ENCODE measurements at regions of chr6 and their contacts with region 1.

Region 1: DNA sequence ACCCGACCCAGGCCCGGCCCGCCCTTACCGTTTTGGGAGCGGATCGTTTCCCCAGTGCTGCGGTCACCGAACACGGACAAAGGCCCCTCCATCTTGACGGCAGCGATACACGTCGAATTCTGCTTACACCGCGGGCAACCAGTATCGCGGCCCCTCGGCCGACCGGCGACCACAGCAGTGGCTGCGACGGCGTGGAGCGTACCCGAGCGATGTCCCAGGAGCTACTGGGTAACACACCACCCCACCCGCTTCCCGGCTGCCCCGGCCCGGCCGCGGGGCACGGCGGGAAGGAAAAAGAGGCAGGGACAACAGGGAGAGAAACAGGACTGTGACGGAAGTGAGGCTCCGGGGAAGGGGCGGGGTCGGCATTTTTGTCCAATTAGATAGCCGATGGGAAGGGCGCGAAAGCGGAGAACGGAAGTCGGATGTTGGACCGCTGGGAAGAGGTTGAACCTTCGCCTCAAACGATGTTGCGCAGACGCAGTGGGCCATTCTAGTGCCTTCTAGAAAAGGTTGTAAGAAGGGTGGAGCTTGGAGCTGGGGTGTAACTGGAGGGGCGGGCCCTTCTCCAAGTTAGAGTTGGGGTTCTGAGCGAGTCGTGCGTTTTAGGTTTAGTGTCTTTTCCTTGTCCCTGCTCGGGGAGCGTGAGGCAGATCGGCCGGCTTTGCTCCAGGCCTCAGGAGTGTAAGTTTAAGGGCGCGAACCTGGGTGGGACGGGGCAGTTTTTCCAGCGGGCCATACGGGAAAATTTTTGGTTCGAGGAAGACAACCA is at the start of gene TCP1:
- DNase-seq: peak; percentile 99
- H3K4me3 ChIP-seq: peak within 1 kb of the TSS; percentile 94 to 98 (median 97)
- H3K27ac ChIP-seq: peak within 1 kb of the TSS; percentile 87
- H3K4me1 ChIP-seq: peaks cover 13% of the 10 kb centered on the region
- H3K27me3 ChIP-seq: no peaks in the 10 kb centered on the region
- CTCF ChIP-seq: no peak
- total RNA-seq, gene TCP1: 186 to 243 TPM

Region 2: GRCh38 chr6:159357211-159357915 is 432.2 kb before region 1 on chr6:
- CTCF ChIA-PET with region 1: no interaction called
- dilution Hi-C with region 1: no loop called
- in situ Hi-C with region 1: no loop called
- intact Hi-C with region 1: no loop called
- DNase-seq: no peak
- H3K4me3 ChIP-seq: no peak overlapping the region
- H3K27ac ChIP-seq: no peak overlapping the region
- H3K4me1 ChIP-seq: no peaks in the 10 kb centered on the region
- H3K27me3 ChIP-seq: peaks cover 2% of the 10 kb centered on the region
- CTCF ChIP-seq: no peak

Region 3: GRCh38 chr6:159726918-159727716 is 62.4 kb before region 1 on chr6 and contains the start of gene WTAP:
- CTCF ChIA-PET with region 1: interaction called, 3 read pairs
- dilution Hi-C with region 1: no loop called
- in situ Hi-C with region 1: no loop called
- intact Hi-C with region 1: loop called (anchors 2 kb)
- DNase-seq: peak; percentile 97
- H3K4me3 ChIP-seq: peak within 1 kb of the TSS; percentile 84 to 92 (median 91)
- H3K27ac ChIP-seq: peak within 1 kb of the TSS; percentile 89
- H3K4me1 ChIP-seq: peaks cover 16% of the 10 kb centered on the region
- H3K27me3 ChIP-seq: no peaks in the 10 kb centered on the region
- CTCF ChIP-seq: no peak
- total RNA-seq, gene WTAP: 64.5 to 92.0 TPM

Region 4: DNA sequence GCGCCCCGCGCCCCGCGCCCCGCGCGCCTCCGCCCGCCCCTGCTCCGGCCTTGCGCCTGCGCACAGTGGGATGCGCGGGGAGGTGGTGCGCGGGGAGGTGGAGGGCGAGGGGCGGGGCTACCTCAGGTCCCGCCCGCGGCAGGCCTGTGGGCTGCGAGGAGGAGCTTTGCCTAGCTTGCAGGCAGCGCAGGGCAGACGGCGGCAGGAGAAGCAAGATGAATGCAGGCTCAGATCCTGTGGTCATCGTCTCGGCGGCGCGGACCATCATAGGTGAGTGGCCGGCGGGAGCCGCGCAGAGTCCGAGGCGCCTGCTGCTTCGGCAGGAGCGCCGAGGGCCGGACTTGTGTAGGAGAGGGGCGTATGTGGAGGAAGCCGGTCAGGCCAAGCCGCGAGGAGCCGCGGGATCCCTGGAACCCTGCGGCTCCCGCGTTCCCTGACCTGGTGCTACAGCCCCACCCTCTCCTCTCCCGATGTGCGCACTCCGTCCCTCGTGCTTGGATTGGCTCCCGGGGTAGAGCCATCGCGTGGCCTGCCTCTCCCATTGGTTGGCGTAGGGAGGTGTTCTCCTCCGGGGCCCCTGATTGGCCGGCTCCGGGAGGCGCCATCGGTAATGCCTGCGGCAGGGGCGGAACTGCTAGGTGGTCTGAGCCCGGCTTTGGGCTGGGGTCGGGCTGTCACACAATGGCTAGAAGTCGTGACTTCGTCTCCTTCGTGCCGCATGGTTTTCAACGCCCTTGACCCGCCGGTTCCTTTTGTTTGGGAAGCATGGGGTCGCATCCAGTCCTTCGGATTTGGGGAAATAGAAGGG is 27.5 kb before region 1 on chr6 and contains the start of gene ACAT2:
- CTCF ChIA-PET with region 1: no interaction called
- dilution Hi-C with region 1: no loop called
- in situ Hi-C with region 1: no loop called
- intact Hi-C with region 1: loop called (anchors 2 kb)
- DNase-seq: peak; percentile 95
- H3K4me3 ChIP-seq: peak within 1 kb of the TSS; percentile 49 to 72 (median 65)
- H3K27ac ChIP-seq: peak within 1 kb of the TSS; percentile 68
- H3K4me1 ChIP-seq: peaks cover 26% of the 10 kb centered on the region
- H3K27me3 ChIP-seq: no peaks in the 10 kb centered on the region
- CTCF ChIP-seq: no peak
- total RNA-seq, gene ACAT2: 39.3 to 235 TPM

Region 5: GRCh38 chr6:159852877-159853276 is 63.3 kb after region 1 on chr6:
- CTCF ChIA-PET with region 1: no interaction called
- dilution Hi-C with region 1: no loop called
- in situ Hi-C with region 1: no loop called
- intact Hi-C with region 1: loop called (anchors 1 kb)
- DNase-seq: no peak
- H3K4me3 ChIP-seq: no peak overlapping the region
- H3K27ac ChIP-seq: no peak overlapping the region
- H3K4me1 ChIP-seq: no peaks in the 10 kb centered on the region
- H3K27me3 ChIP-seq: no peaks in the 10 kb centered on the region
- CTCF ChIP-seq: peak; percentile 23 to 51

Region 6: GRCh38 chr6:159941286-159942113 is 151.9 kb after region 1 on chr6:
- CTCF ChIA-PET with region 1: no interaction called
- dilution Hi-C with region 1: no loop called
- in situ Hi-C with region 1: no loop called
- intact Hi-C with region 1: loop called (anchors 2 kb)
- DNase-seq: peak; percentile 51
- H3K4me3 ChIP-seq: no peak overlapping the region
- H3K27ac ChIP-seq: no peak overlapping the region
- H3K4me1 ChIP-seq: no peaks in the 10 kb centered on the region
- H3K27me3 ChIP-seq: no peaks in the 10 kb centered on the region
- CTCF ChIP-seq: peak; percentile 35 to 66

Region 7: GRCh38 chr6:160121981-160122380 is 332.4 kb after region 1 on chr6:
- CTCF ChIA-PET with region 1: no interaction called
- dilution Hi-C with region 1: no loop called
- in situ Hi-C with region 1: no loop called
- intact Hi-C with region 1: no loop called
- DNase-seq: no peak
- H3K4me3 ChIP-seq: no peak overlapping the region
- H3K27ac ChIP-seq: no peak overlapping the region
- H3K4me1 ChIP-seq: no peaks in the 10 kb centered on the region
- H3K27me3 ChIP-seq: no peaks in the 10 kb centered on the region
- CTCF ChIP-seq: no peak

Measured in mammary epithelial cell (primary cell).